Panc1 (cell line): ENCODE measurements at regions of chr12 and their contacts with region 1.

Region 1: GRCh38 chr12:110750784-110751461 is 8.2 kb upstream of the PPP1CC start:
- DNase-seq: no peak
- ATAC-seq: no peak
- H3K4me3 ChIP-seq: no peak overlapping the region
- H3K27ac ChIP-seq: no peak overlapping the region
- H3K4me1 ChIP-seq: no peaks in the 10 kb centered on the region
- H3K27me3 ChIP-seq: no peaks in the 10 kb centered on the region
- CTCF ChIP-seq: no peak

Region 2: DNA sequence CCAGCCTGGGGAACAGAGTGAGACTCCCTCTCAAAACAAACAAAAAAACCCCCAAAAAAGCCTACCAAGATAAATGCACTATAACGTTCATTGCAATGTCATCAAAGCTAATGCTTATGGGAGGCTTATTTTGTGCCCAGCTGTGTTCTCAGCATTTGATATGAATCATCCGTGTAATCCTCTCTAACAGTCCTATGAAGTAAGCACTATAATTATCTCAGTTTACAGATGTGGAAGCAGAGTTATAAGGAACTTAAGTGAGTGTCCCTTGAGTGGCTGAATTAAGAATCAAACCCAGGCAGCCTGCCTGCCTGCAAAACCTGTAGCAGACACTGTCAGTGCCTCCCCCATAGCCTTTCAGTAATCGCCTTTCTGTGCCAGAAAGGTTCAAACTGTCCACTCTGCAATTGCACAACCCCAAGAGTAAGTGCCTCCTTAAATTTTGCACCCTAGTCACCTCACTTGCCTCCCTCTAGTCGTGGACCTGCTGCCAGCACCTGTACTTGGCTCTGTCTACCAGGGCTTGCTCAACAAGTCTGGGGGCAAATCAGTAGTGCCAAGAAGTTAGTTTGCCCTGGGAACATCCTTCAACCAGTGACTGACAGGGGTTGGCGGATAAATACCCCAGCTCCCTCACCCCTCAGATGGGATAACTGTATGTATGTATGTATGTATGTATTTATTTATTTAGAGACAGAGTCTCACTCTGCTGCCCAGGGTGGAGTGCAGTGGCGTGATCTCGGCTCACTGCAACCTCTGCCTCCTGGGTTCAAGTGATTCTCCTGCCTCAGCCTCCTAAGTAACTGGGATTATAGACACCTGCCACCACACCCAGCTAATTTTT is 15.6 kb after region 1 on chr12:
- CTCF ChIA-PET with region 1: no interaction called
- POLR2A ChIA-PET with region 1: no interaction called
- in situ Hi-C with region 1: no loop called
- intact Hi-C with region 1: no loop called
- DNase-seq: no peak
- ATAC-seq: no peak
- H3K4me3 ChIP-seq: no peak overlapping the region
- H3K27ac ChIP-seq: no peak overlapping the region
- H3K4me1 ChIP-seq: no peaks in the 10 kb centered on the region
- H3K27me3 ChIP-seq: no peaks in the 10 kb centered on the region
- CTCF ChIP-seq: no peak

Region 3: GRCh38 chr12:110844551-110845395 is 93.8 kb after region 1 on chr12:
- CTCF ChIA-PET with region 1: no interaction called
- POLR2A ChIA-PET with region 1: no interaction called
- in situ Hi-C with region 1: no loop called
- intact Hi-C with region 1: no loop called
- DNase-seq: no peak
- ATAC-seq: no peak
- H3K4me3 ChIP-seq: no peak overlapping the region
- H3K27ac ChIP-seq: no peak overlapping the region
- H3K4me1 ChIP-seq: peaks cover 5% of the 10 kb centered on the region; the same call in 1 of the 2 replicates
- H3K27me3 ChIP-seq: no peaks in the 10 kb centered on the region
- CTCF ChIP-seq: no peak

Region 4: DNA sequence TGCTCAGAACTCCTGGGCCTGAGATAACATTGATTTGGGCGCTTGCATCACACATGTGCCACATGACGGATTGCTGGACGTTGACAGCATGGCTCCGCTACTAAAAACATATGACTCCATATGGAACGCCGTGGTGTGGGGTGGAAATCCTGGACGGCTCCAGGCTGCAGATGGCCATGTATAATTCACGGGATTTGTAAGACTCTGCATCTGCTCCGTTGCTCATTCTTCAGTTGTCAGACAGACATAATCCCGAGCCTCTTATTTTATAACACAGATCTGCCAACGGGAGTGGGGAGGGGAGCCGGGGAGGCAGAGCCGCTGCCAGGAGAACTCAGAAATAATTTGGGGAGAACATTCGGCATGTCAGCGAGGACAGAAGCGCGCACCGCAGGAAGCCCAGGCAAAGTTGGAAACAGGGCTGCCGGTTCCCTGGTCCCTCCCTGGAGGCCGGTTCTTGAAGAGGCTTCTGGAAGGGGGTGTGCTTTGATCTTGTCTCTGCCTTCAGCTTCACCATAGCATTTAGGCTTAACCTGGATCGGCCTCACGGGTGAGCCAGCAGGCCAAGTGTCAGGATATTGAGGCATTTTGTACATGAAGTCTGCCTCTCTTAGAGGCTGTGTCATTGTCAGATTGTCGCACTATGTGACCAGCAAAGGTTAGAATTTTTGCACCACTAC is 215.3 kb after region 1 on chr12:
- CTCF ChIA-PET with region 1: interaction called, 12 read pairs
- POLR2A ChIA-PET with region 1: no interaction called
- in situ Hi-C with region 1: no loop called
- intact Hi-C with region 1: no loop called
- DNase-seq: no peak
- ATAC-seq: no peak
- H3K4me3 ChIP-seq: no peak overlapping the region
- H3K27ac ChIP-seq: no peak overlapping the region
- H3K4me1 ChIP-seq: no peaks in the 10 kb centered on the region
- H3K27me3 ChIP-seq: peaks cover 11% of the 10 kb centered on the region
- CTCF ChIP-seq: no peak